ENCODE measurements at regions of chr3 and their contacts with region 1.

Region 1: DNA sequence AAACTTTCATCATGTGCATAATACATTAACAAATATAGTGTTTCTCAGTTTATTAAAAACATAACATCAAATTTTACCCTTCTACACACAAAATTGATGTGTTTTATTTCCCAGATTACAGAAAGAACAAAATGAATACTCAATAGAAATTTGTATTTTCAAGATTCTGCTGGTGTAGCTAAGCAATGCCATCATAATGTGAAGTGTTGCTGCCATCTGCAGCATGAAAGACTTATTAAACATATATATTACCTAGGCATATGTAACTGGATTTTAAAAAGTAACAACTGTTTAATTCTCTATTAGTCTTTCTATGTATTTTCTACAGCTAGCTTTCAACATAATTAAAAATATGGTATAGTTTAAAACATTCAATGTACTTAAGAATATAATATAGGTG is 27.5 kb downstream of the PLSCR5 start:
- DNase-seq: no peak
- H3K4me3 ChIP-seq: no peak overlapping the region
- H3K27ac ChIP-seq: no peak overlapping the region
- H3K4me1 ChIP-seq: no peaks in the 10 kb centered on the region
- H3K27me3 ChIP-seq: no peaks in the 10 kb centered on the region
- CTCF ChIP-seq: peak in 9 of 11 experiments; percentile 13 to 50 (median 30)
- POLR2A ChIP-seq: no peak

Region 2: DNA sequence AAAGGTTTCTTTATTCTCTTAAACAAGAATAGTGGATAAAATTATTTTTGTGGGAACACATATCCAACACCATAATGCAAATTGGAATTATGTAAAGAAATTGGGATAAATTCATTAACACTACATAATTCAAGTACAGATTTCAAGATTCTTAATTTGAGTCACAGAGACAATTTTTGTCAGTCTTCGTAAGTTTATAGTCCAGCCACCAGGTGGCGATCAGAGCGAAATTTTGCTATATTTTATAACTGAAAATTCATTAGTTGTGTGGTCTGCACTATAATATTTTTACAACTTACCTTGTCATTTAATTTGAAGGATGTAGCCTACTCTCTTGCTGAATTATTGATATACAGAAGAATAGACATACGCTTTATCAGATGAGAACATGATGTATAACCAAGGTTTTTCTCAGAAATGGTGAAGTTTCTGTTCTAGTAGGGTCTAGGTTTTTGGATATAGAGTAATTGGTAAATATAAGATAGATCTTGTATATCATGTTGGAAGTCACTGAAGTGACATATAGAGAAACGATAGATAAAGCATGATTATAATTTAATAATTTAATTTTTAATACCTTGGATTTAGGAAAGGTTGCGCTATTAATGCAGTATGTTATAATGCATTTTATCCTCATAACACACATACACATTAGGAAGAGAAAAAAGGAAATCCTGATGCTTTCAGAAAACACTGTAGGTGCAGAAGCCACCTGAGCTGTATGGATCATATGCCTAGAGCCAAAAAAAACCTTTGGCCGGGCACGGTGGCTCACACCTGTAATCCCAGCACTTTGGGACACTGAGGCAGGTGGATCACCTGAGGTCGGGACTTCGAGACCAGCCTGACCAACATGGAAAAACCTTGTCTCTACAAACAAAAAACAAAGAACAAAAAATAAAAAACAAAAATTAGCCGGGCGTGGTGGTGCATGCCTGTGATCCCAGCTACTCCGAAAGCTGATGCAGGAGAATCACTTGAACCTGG is 358.5 kb before region 1 on chr3:
- intact Hi-C with region 1: loop called (anchors 5 kb)
- DNase-seq: no peak
- H3K4me3 ChIP-seq: no peak overlapping the region
- H3K27ac ChIP-seq: no peak overlapping the region
- H3K4me1 ChIP-seq: peaks cover 0 to 21% (median 7%) of the 10 kb centered on the region in 6 donors
- H3K27me3 ChIP-seq: no peaks in the 10 kb centered on the region
- CTCF ChIP-seq: peak; percentile 4 to 72 (median 55)
- POLR2A ChIP-seq: no peak

Measured in spleen (tissue), 13 donors.